ENCODE measurements at regions of chr22 and their contacts with region 1.

Region 1: GRCh38 chr22:19447388-19448075 is at the start of gene C22orf39:
- DNase-seq: peak; percentile 98
- H3K4me3 ChIP-seq: peak within 1 kb of the TSS; percentile 75 to 87
- H3K27ac ChIP-seq: peak within 1 kb of the TSS; percentile 41 to 90
- H3K4me1 ChIP-seq: peaks cover 0 to 19% of the 10 kb centered on the region in 2 experiments; a peak in 1 of 4 replicates
- H3K27me3 ChIP-seq: no peaks in the 10 kb centered on the region
- CTCF ChIP-seq: no peak
- EP300 ChIP-seq: peak in 1 of 2 experiments; percentile 43; a peak in 1 of 4 replicates
- RAD21 ChIP-seq: no peak
- polyA plus RNA-seq, gene C22orf39: 17.7 and 22.2 TPM in 2 replicates

Region 2: GRCh38 chr22:19321757-19322156 is 125.8 kb before region 1 on chr22:
- CTCF ChIA-PET with region 1: no interaction called
- POLR2A ChIA-PET with region 1: no interaction called
- DNase-seq: no peak
- H3K4me3 ChIP-seq: no peak overlapping the region
- H3K27ac ChIP-seq: no peak overlapping the region
- H3K4me1 ChIP-seq: no peaks in the 10 kb centered on the region
- H3K27me3 ChIP-seq: no peaks in the 10 kb centered on the region
- CTCF ChIP-seq: no peak
- EP300 ChIP-seq: no peak
- RAD21 ChIP-seq: no peak

Region 3: GRCh38 chr22:19488884-19489843 is 41.6 kb after region 1 on chr22:
- CTCF ChIA-PET with region 1: no interaction called
- POLR2A ChIA-PET with region 1: interaction called, 11 read pairs
- DNase-seq: peak; percentile 57
- H3K4me3 ChIP-seq: no peak overlapping the region
- H3K27ac ChIP-seq: no peak overlapping the region
- H3K4me1 ChIP-seq: no peaks in the 10 kb centered on the region
- H3K27me3 ChIP-seq: no peaks in the 10 kb centered on the region
- CTCF ChIP-seq: peak; percentile 35
- EP300 ChIP-seq: no peak
- RAD21 ChIP-seq: peak; percentile 45; the same call in 1 of the 2 replicates

Region 4: DNA sequence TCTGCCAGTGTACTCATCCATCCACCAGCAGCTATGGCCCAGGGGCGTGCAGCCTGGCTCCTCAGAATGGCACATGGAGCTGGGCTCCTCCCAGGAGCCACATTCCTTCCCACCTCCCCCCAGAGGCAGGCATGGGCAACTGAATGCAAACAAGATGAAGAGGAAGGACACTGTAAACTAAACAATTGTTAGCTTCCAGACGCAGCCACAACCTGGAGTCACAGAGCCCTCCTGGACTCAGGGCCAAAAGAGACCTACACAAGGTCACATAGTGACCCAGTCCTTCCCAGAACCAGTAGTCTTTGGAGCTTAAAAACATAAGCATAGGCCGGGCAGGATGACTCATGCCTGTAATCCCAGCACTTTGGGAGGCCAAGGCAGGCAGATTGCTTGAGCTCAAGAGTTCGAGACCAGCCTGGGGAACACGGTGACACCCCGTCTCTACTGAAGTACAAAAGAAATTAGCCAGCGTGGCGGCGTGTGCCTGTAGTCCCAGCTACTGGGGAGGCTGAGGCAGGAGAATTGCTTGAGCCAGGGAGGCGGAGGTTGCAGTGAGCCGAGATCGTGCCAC is 107.4 kb after region 1 on chr22:
- CTCF ChIA-PET with region 1: no interaction called
- POLR2A ChIA-PET with region 1: no interaction called
- DNase-seq: peak; percentile 40
- H3K4me3 ChIP-seq: no peak overlapping the region
- H3K27ac ChIP-seq: no peak overlapping the region
- H3K4me1 ChIP-seq: no peaks in the 10 kb centered on the region; a peak in 1 of 4 replicates
- H3K27me3 ChIP-seq: no peaks in the 10 kb centered on the region; the same call in 1 of the 2 replicates
- CTCF ChIP-seq: 0 out of 2 replicates have a peak, but pooled peaks have one; percentile 7
- EP300 ChIP-seq: no peak
- RAD21 ChIP-seq: no peak

Region 5: GRCh38 chr22:19576460-19577421 is 129.2 kb after region 1 on chr22:
- CTCF ChIA-PET with region 1: no interaction called
- POLR2A ChIA-PET with region 1: no interaction called
- DNase-seq: peak; percentile 54
- H3K4me3 ChIP-seq: no peak overlapping the region
- H3K27ac ChIP-seq: no peak overlapping the region
- H3K4me1 ChIP-seq: peaks cover 0 to 7% of the 10 kb centered on the region in 2 experiments; a peak in 1 of 4 replicates
- H3K27me3 ChIP-seq: no peaks in the 10 kb centered on the region
- CTCF ChIP-seq: no peak
- EP300 ChIP-seq: no peak
- RAD21 ChIP-seq: no peak

Region 6: DNA sequence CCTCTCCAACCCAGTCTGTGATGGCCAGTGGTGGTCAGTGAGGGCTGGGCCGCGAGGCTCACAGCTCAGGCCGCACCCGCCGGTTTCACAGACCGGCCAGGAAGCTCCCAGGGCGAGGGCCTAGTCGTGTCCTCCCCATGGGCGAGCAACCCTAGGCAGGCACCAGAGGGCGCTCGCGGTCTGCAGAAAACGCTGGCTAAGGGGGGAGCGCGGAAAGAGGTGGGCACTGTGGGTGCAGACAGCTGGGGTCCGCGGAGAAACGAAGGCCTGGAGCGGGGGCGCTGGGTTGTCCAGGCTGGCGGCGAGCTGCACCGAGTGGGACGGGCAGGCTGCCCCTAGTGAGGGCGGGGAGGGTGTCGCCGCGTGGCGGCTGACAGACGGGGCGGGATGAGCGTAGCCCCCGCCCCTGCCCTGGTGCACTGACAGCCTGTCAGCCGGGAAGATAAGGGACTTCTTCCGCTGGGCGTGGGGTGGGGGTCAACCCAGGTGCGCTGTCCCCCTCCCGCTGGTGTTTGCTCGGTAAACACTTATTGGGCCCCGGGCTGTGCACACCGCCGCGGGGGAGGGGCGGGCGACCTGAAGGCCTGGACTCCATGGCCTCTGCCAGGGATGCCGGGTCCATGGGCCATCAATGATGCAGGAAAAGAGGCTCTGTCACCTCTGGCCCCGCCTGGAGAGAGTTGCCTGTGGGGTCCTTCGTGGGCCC is 283.3 kb after region 1 on chr22:
- CTCF ChIA-PET with region 1: no interaction called
- POLR2A ChIA-PET with region 1: no interaction called
- DNase-seq: peak; percentile 96
- H3K4me3 ChIP-seq: peak overlapping the region; percentile 47 to 65; a peak in 3 of 4 replicates
- H3K27ac ChIP-seq: no peak overlapping the region
- H3K4me1 ChIP-seq: peaks cover 0 to 26% of the 10 kb centered on the region in 2 experiments; a peak in 1 of 4 replicates
- H3K27me3 ChIP-seq: no peaks in the 10 kb centered on the region
- CTCF ChIP-seq: peak; percentile 91
- EP300 ChIP-seq: no peak
- RAD21 ChIP-seq: peak; percentile 97